ENCODE measurements at regions of chr4 and their contacts with region 1.

Region 1: GRCh38 chr4:7042697-7043464 is at the start of gene TADA2B:
- DNase-seq: peak; percentile 87 to 98
- H3K4me3 ChIP-seq: peak within 1 kb of the TSS; percentile 86
- H3K27ac ChIP-seq: no peak within 1 kb of the TSS
- H3K4me1 ChIP-seq: 0 out of 2 replicates have a peak, but pooled peaks cover 16% of the 10 kb centered on the region
- H3K27me3 ChIP-seq: no peaks in the 10 kb centered on the region
- CTCF ChIP-seq: no peak
- total RNA-seq, gene TADA2B: 9.5 and 9.6 TPM in 2 replicates

Region 2: GRCh38 chr4:6986781-6987587 is 55.9 kb before region 1 on chr4:
- CTCF ChIA-PET with region 1: no interaction called
- POLR2A ChIA-PET with region 1: no interaction called
- intact Hi-C with region 1: loop called (anchors 1 kb)
- DNase-seq: peak; percentile 79 to 96
- H3K4me3 ChIP-seq: peak overlapping the region; percentile 92
- H3K27ac ChIP-seq: peak overlapping the region; percentile 86
- H3K4me1 ChIP-seq: peaks cover 24% of the 10 kb centered on the region
- H3K27me3 ChIP-seq: no peaks in the 10 kb centered on the region
- CTCF ChIP-seq: no peak

Region 3: GRCh38 chr4:7101692-7102515 is 59.0 kb after region 1 on chr4:
- CTCF ChIA-PET with region 1: no interaction called
- POLR2A ChIA-PET with region 1: no interaction called
- intact Hi-C with region 1: no loop called
- DNase-seq: peak; percentile 46 to 62
- H3K4me3 ChIP-seq: peak overlapping the region; percentile 35; the same call in 1 of the 2 replicates
- H3K27ac ChIP-seq: no peak overlapping the region
- H3K4me1 ChIP-seq: peaks cover 13% of the 10 kb centered on the region
- H3K27me3 ChIP-seq: peaks cover 6% of the 10 kb centered on the region; the same call in 1 of the 2 replicates
- CTCF ChIP-seq: peak; percentile 64

Region 4: GRCh38 chr4:7358100-7358735 is 315.3 kb after region 1 on chr4:
- CTCF ChIA-PET with region 1: interaction called, 10 read pairs
- POLR2A ChIA-PET with region 1: no interaction called
- intact Hi-C with region 1: no loop called
- DNase-seq: peak; percentile 62 to 81
- H3K4me3 ChIP-seq: no peak overlapping the region
- H3K27ac ChIP-seq: no peak overlapping the region
- H3K4me1 ChIP-seq: peaks cover 5% of the 10 kb centered on the region
- H3K27me3 ChIP-seq: no peaks in the 10 kb centered on the region
- CTCF ChIP-seq: no peak

Measured in PC-9 (cell line).